Right ventricle myocardium inferior (tissue), 1 donor: ENCODE measurements at regions of chr16 and their contacts with region 1.

Region 1: DNA sequence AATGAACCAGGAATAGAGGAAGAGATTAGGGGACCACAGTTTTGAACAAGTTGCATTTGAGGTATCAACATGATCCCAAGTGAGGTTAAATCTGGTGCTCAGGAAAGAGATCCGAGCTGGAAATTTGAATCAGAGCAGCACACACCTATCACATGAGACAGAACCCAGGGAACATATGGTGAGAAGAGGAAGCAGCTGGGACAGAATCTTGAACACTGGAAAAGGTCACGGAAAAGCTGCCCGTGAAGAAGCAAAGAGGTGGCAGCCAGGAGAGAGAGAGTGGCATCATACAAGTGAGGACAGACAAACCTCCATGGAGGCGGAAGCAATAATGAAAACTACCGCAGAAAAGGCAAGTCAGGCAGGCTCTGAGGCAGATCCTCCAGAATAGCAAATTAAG is 36.1 kb downstream of the USP31 start:
- DNase-seq: no peak
- ATAC-seq: no peak

Region 2: GRCh38 chr16:23060458-23061320 is 52.5 kb before region 1 on chr16:
- intact Hi-C with region 1: loop called (anchors 2 kb)
- DNase-seq: peak; percentile 67
- ATAC-seq: peak; percentile 74